ENCODE measurements at regions of chr14 and their contacts with region 1.

Region 1: GRCh38 chr14:102096214-102097114 is 9.6 kb upstream of the HSP90AA1 start:
- DNase-seq: peak; percentile 35 to 66 (median 46)
- ATAC-seq: peak; percentile 77
- H3K4me3 ChIP-seq: no peak overlapping the region
- H3K4me3 Mint-ChIP-seq: no peak overlapping the region
- H3K27ac ChIP-seq: no peak overlapping the region
- H3K27ac Mint-ChIP-seq: peak overlapping the region in 4 of 9 donors; percentile 1 to 50 (median 34)
- H3K4me1 ChIP-seq: no peaks in the 10 kb centered on the region
- H3K4me1 Mint-ChIP-seq: peaks cover 3 to 12% (median 5%) of the 10 kb centered on the region in 7 donors
- H3K27me3 ChIP-seq: no peaks in the 10 kb centered on the region
- H3K27me3 Mint-ChIP-seq: no peaks in the 10 kb centered on the region

Region 2: GRCh38 chr14:102020058-102020971 is 76.1 kb before region 1 on chr14:
- CTCF ChIA-PET with region 1: interaction called, 3 read pairs
- POLR2A ChIA-PET with region 1: interaction called, 3 read pairs
- intact Hi-C with region 1: loop called in 1 of 2 experiments (anchors 1 kb)
- DNase-seq: peak in 8 of 9 donors; percentile 35 to 71 (median 60)
- ATAC-seq: peak; percentile 82
- H3K4me3 ChIP-seq: no peak overlapping the region
- H3K4me3 Mint-ChIP-seq: peak overlapping the region; percentile 9 to 81 (median 60)
- H3K27ac ChIP-seq: peak overlapping the region; percentile 51
- H3K27ac Mint-ChIP-seq: peak overlapping the region; percentile 76 to 94 (median 89)
- H3K4me1 ChIP-seq: peaks cover 0 to 14% of the 10 kb centered on the region in 2 donors
- H3K4me1 Mint-ChIP-seq: peaks cover 11 to 23% (median 15%) of the 10 kb centered on the region in 7 donors
- H3K27me3 ChIP-seq: no peaks in the 10 kb centered on the region
- H3K27me3 Mint-ChIP-seq: no peaks in the 10 kb centered on the region

Region 3: GRCh38 chr14:102034301-102034700 is 62.2 kb before region 1 on chr14:
- CTCF ChIA-PET with region 1: no interaction called
- POLR2A ChIA-PET with region 1: no interaction called
- intact Hi-C with region 1: no loop called
- DNase-seq: no peak
- ATAC-seq: no peak
- H3K4me3 ChIP-seq: no peak overlapping the region
- H3K4me3 Mint-ChIP-seq: no peak overlapping the region
- H3K27ac ChIP-seq: no peak overlapping the region
- H3K27ac Mint-ChIP-seq: no peak overlapping the region
- H3K4me1 ChIP-seq: no peaks in the 10 kb centered on the region
- H3K4me1 Mint-ChIP-seq: no peaks in the 10 kb centered on the region
- H3K27me3 ChIP-seq: no peaks in the 10 kb centered on the region
- H3K27me3 Mint-ChIP-seq: no peaks in the 10 kb centered on the region

Region 4: GRCh38 chr14:102046343-102047278 is 49.9 kb before region 1 on chr14:
- CTCF ChIA-PET with region 1: interaction called, 6 read pairs
- POLR2A ChIA-PET with region 1: no interaction called
- intact Hi-C with region 1: loop called in 1 of 2 experiments (anchors 1 kb)
- DNase-seq: no peak
- ATAC-seq: peak; percentile 53
- H3K4me3 ChIP-seq: no peak overlapping the region
- H3K4me3 Mint-ChIP-seq: no peak overlapping the region
- H3K27ac ChIP-seq: no peak overlapping the region
- H3K27ac Mint-ChIP-seq: peak overlapping the region in 1 of 9 donors; percentile 8
- H3K4me1 ChIP-seq: no peaks in the 10 kb centered on the region
- H3K4me1 Mint-ChIP-seq: peaks cover 0 to 2% (median 0%) of the 10 kb centered on the region in 7 donors
- H3K27me3 ChIP-seq: no peaks in the 10 kb centered on the region
- H3K27me3 Mint-ChIP-seq: no peaks in the 10 kb centered on the region

Region 5: GRCh38 chr14:102063091-102063802 is 33.2 kb before region 1 on chr14:
- CTCF ChIA-PET with region 1: interaction called, 19 read pairs
- POLR2A ChIA-PET with region 1: interaction called, 3 read pairs
- intact Hi-C with region 1: loop called (anchors 1 kb)
- DNase-seq: peak; percentile 42 to 70 (median 57)
- ATAC-seq: peak; percentile 98
- H3K4me3 ChIP-seq: no peak overlapping the region
- H3K4me3 Mint-ChIP-seq: no peak overlapping the region
- H3K27ac ChIP-seq: no peak overlapping the region
- H3K27ac Mint-ChIP-seq: no peak overlapping the region
- H3K4me1 ChIP-seq: peaks cover 0 to 10% of the 10 kb centered on the region in 2 donors
- H3K4me1 Mint-ChIP-seq: peaks cover 0 to 8% (median under 1%) of the 10 kb centered on the region in 7 donors
- H3K27me3 ChIP-seq: no peaks in the 10 kb centered on the region
- H3K27me3 Mint-ChIP-seq: peaks cover 0 to 3% (median 0%) of the 10 kb centered on the region in 5 donors

Region 6: DNA sequence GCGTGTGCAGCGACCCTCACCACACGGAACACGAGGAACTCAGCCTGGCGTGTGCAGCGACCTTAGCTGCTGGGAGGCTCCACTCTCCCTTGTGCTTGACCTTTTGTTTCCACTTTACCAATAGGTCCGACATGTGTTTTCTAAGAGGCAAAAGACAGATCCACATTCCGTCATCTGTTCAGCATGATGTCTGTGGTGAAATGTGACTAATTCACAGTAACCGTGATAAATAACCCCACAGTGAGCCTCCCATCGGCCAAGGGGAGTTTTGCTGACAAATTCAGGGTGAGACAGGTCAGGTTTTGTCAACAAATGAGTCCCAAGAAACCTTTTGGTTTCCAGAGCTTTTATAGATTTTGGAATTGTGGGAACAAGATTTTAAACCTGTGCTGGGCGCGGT is 152.6 kb after region 1 on chr14:
- CTCF ChIA-PET with region 1: no interaction called
- POLR2A ChIA-PET with region 1: no interaction called
- intact Hi-C with region 1: no loop called
- DNase-seq: no peak
- ATAC-seq: no peak
- H3K4me3 ChIP-seq: no peak overlapping the region
- H3K4me3 Mint-ChIP-seq: no peak overlapping the region
- H3K27ac ChIP-seq: no peak overlapping the region
- H3K27ac Mint-ChIP-seq: no peak overlapping the region
- H3K4me1 ChIP-seq: no peaks in the 10 kb centered on the region
- H3K4me1 Mint-ChIP-seq: no peaks in the 10 kb centered on the region
- H3K27me3 ChIP-seq: no peaks in the 10 kb centered on the region
- H3K27me3 Mint-ChIP-seq: no peaks in the 10 kb centered on the region